ENCODE measurements at regions of chr13 and their contacts with region 1.

Region 1: DNA sequence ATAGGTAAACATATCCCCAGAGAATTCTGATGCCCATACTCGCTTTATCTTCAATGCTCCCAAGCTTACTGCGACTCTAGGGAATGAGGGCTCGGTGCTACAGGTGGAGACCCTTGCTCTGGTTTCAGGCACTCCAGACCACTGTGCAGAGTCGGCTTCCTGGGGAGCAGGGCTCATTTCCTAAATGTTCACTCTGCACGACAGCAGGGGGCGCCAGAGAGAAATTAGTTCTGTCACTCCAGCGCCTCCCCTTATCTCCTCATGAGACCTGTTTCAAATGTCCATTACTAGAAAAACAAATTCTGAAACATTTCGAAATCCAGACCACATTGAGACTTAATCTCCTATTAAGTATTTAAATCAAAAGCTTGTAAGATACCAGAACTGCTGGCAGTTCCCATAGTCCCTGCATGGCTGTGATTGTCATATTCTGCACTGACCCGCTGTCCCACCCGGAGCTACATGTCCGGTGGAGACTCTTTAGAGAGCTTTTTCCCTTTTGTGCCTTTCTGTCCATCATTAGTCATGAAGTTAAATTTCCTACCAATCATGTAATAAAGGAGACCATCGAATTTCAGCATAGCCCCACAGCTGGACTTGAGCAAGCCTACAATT is 22.4 kb downstream of the EPSTI1 start:
- DNase-seq: peak; percentile 63
- H3K4me3 Mint-ChIP-seq: no peak overlapping the region
- H3K27ac Mint-ChIP-seq: no peak overlapping the region
- H3K4me1 Mint-ChIP-seq: peaks cover 35% of the 10 kb centered on the region
- H3K27me3 Mint-ChIP-seq: no peaks in the 10 kb centered on the region

Region 2: DNA sequence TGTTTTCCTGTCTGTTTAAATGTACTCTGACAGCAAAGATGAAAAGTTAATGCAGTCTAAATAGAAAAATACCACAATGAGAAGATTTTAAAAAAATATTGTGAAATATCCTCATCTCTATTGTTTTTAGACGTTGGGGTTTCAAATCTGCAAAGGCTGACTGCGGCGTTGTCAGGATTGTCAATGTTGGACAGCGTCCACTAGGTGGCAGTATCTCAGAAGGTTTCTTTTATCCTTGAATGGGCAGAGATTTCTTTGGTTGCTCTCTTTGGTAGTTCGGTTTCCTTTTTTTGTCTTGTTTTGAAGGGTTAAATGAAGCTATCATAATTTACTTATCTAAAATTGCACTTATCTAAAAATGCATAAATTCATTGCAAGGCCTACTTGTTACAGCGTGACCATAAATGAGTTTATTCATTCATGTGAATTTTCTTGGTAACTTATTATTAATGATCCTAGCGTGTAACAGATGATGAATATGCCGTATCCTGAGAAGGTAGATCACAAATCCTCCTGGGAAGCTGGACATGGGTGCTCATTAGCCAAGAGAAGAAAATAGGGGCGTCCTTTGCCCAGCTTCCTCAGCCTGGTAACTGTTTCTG is 374.6 kb before region 1 on chr13:
- intact Hi-C with region 1: loop called (anchors 10 kb)
- DNase-seq: peak; percentile 12
- H3K4me3 Mint-ChIP-seq: no peak overlapping the region
- H3K27ac Mint-ChIP-seq: no peak overlapping the region
- H3K4me1 Mint-ChIP-seq: peaks cover 2% of the 10 kb centered on the region
- H3K27me3 Mint-ChIP-seq: peaks cover 10% of the 10 kb centered on the region

Region 3: GRCh38 chr13:42803563-42804212 is 166.0 kb before region 1 on chr13:
- intact Hi-C with region 1: no loop called
- DNase-seq: no peak
- H3K4me3 Mint-ChIP-seq: no peak overlapping the region
- H3K27ac Mint-ChIP-seq: no peak overlapping the region
- H3K4me1 Mint-ChIP-seq: no peaks in the 10 kb centered on the region
- H3K27me3 Mint-ChIP-seq: peaks cover 7% of the 10 kb centered on the region

Region 4: DNA sequence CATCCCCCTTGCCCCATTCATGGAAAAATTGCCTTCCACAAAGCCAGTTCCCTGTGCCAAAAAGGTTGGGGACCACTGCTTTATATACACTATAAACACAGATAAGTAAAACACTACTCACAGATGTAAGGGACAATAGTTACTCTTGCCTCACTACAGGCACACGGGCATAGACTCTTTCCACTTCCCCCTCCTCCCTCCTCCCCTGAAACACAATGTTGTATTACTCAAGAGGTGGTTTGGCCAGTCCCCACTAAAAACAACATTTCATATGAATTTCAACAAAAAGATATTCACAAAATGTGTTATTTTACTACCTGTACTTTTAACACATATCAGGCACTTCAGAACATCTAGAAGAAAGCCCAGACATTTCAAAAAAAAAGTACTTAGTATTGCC is 22.7 kb before region 1 on chr13:
- intact Hi-C with region 1: no loop called
- DNase-seq: no peak
- H3K4me3 Mint-ChIP-seq: no peak overlapping the region
- H3K27ac Mint-ChIP-seq: no peak overlapping the region
- H3K4me1 Mint-ChIP-seq: no peaks in the 10 kb centered on the region
- H3K27me3 Mint-ChIP-seq: no peaks in the 10 kb centered on the region

Region 5: DNA sequence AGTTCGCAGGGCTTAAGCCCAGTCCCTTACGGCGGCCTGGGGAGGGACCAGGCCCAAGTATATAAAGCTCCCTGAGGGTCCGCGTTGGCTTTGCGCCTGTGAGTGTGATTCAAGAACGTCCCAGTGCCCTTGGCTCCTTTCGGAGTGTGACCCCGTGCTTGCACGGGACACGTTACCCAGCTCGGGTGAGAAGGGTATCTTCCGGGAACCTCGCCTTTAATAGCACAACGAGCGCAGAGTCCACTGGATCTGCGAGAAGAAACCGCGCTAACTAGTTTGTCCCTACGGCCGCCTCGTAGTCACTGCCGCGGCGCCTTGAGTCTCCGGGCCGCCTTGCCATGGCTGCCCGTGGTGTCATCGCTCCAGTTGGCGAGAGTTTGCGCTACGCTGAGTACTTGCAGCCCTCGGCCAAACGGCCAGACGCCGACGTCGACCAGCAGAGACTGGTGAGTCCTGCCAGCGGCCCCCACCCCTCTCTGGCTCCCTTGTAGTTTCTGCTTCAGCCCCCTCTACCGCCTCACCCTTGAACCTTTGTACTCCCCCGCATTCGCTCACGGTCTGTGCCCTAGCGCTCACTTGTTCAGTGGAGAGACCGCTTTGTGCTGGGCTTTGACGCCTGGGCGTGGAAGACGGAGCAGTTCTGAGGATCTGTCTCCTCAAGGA is 53.8 kb after region 1 on chr13 and contains the start of gene DNAJC15:
- intact Hi-C with region 1: loop called (anchors 1 kb)
- DNase-seq: peak; percentile 78
- H3K4me3 Mint-ChIP-seq: peak within 1 kb of the TSS; percentile 96
- H3K27ac Mint-ChIP-seq: peak within 1 kb of the TSS; percentile 89
- H3K4me1 Mint-ChIP-seq: peaks cover 30% of the 10 kb centered on the region
- H3K27me3 Mint-ChIP-seq: no peaks in the 10 kb centered on the region
- total RNA-seq, gene DNAJC15: 18.5 and 20.5 TPM in 2 replicates

Region 6: GRCh38 chr13:43085545-43085944 is 115.9 kb after region 1 on chr13:
- intact Hi-C with region 1: no loop called
- DNase-seq: no peak
- H3K4me3 Mint-ChIP-seq: no peak overlapping the region
- H3K27ac Mint-ChIP-seq: no peak overlapping the region
- H3K4me1 Mint-ChIP-seq: peaks cover 9% of the 10 kb centered on the region
- H3K27me3 Mint-ChIP-seq: no peaks in the 10 kb centered on the region

Region 7: DNA sequence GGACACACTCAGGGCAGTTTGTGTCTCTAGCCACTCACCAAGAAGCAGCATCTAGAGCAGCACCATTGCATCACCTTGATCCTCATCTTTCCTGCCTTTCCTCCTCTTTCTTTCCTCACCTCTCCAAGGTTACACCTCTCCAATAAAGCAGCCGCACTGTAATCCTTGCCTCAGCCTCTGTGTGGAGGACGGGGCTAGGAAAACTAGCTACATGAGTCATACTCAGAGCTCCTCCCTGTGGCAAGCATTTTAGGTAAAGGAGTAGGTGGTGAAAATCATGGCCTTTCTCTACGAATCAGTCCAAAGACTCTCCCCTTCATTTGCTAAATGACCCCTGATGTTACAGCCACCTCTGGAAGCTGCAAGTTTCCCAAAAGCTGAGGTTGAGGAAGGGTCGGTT is 162.6 kb after region 1 on chr13:
- intact Hi-C with region 1: loop called (anchors 1 kb)
- DNase-seq: no peak
- H3K4me3 Mint-ChIP-seq: no peak overlapping the region
- H3K27ac Mint-ChIP-seq: no peak overlapping the region
- H3K4me1 Mint-ChIP-seq: peaks cover 11% of the 10 kb centered on the region
- H3K27me3 Mint-ChIP-seq: peaks cover 8% of the 10 kb centered on the region

Region 8: DNA sequence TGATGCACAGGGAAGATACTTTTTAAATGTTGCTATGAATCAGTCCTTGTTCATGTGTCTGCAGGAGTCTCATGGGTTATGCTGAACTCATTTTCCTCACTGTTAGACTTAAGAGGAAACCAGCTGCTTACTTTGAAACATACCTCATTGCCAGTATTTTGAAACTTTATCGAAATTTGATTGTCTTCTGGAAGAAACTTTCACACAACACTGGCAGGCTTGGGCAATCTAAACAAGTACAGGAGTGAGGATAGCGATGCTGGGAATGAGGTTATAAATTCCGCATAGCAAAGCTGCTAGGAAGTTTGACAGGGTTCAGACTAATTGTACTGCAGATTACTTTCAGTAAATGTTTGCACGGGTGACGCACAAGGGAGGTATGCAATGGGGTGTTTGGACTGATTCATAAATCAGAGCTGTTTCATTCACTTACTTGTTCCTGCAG is 299.4 kb after region 1 on chr13:
- intact Hi-C with region 1: no loop called
- DNase-seq: no peak
- H3K4me3 Mint-ChIP-seq: no peak overlapping the region
- H3K27ac Mint-ChIP-seq: no peak overlapping the region
- H3K4me1 Mint-ChIP-seq: no peaks in the 10 kb centered on the region
- H3K27me3 Mint-ChIP-seq: peaks cover 5% of the 10 kb centered on the region

Region 9: DNA sequence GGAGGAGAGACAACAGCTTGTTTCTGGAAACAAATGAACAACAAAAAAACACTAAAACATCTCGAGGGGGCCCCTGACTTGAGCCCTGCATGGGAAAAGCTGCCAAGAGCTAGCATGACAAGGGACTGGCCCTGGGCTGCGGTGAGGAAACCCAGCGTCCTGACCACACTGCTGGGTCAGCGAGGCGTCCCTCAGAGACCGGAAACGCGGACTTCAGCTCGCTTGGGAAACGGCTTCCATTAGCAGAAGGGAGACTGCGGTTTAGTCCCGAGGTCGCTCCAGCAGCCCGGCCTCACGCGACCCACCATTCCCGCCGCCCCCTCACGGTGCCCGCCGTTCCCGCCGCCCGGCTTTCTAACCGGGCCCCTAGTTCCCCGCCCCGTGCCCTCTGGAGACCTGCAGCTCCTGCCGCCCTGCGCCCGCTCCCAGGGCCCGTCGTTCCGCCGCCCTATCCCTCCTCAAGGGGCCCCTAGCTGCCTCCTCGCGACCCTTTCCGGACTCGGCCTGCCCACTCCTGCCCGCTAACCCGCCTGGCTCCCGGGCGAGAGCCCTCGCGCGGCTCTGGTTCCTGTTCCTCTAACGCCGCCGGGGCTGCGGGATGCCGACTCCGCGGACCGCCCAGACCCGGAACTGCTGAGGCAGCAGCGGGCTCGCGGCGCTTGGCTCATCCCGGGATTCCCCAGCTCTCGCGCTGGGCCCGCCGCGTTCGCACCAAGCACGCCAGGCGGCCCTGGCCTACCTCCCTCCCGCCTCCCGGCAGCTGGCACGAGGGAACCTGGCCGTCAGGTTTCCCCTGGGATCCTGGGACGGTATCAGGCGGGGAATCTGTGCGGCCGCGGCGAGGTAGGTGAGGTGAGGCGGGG is 909.5 kb after region 1 on chr13 and contains the start of gene CCDC122:
- intact Hi-C with region 1: loop called (anchors 1 kb)
- DNase-seq: peak; percentile 75
- H3K4me3 Mint-ChIP-seq: peak within 1 kb of the TSS; percentile 84
- H3K27ac Mint-ChIP-seq: peak within 1 kb of the TSS; percentile 81
- H3K4me1 Mint-ChIP-seq: peaks cover 28% of the 10 kb centered on the region
- H3K27me3 Mint-ChIP-seq: peaks cover 15% of the 10 kb centered on the region
- total RNA-seq, gene CCDC122: 0.86 and 1.5 TPM in 2 replicates

Measured in activated T-helper 1 cell treated with anti-CD3 and anti-CD28 coated beads, Interleukin-12 subunit alpha, Interleukin-12 subunit beta, Interleukin-2, Interleukin-4 antibody, amounts not matched to agents 30 ng/mL and 10 ng/mL and 1 ng/mL, durations not matched to agents 14 hours and 24 hours and 36 hours (primary cell).